ENCODE measurements at regions of chrX and their contacts with region 1.

Region 1: GRCh38 chrX:19756597-19757131 is 130.7 kb downstream of the SH3KBP1 start:
- DNase-seq: no peak
- ATAC-seq: no peak
- H3K4me3 ChIP-seq: no peak overlapping the region
- H3K4me3 Mint-ChIP-seq: no peak overlapping the region
- H3K27ac ChIP-seq: peak overlapping the region; percentile 49
- H3K27ac Mint-ChIP-seq: peak overlapping the region; percentile 34 to 66
- H3K4me1 ChIP-seq: peaks cover 23 to 41% of the 10 kb centered on the region in 2 experiments
- H3K4me1 Mint-ChIP-seq: peaks cover 69 to 87% (median 80%) of the 10 kb centered on the region in 3 donors
- H3K27me3 ChIP-seq: no peaks in the 10 kb centered on the region
- H3K27me3 Mint-ChIP-seq: peaks cover 0 to 3% of the 10 kb centered on the region in 2 donors

Region 2: GRCh38 chrX:19579485-19579884 is 177.2 kb before region 1 on chrX:
- CTCF ChIA-PET with region 1: no interaction called
- POLR2A ChIA-PET with region 1: no interaction called
- DNase-seq: no peak
- ATAC-seq: no peak
- H3K4me3 ChIP-seq: no peak overlapping the region
- H3K4me3 Mint-ChIP-seq: no peak overlapping the region
- H3K27ac ChIP-seq: no peak overlapping the region
- H3K27ac Mint-ChIP-seq: no peak overlapping the region
- H3K4me1 ChIP-seq: no peaks in the 10 kb centered on the region
- H3K4me1 Mint-ChIP-seq: peaks cover 3 to 16% (median 6%) of the 10 kb centered on the region in 3 donors
- H3K27me3 ChIP-seq: no peaks in the 10 kb centered on the region
- H3K27me3 Mint-ChIP-seq: no peaks in the 10 kb centered on the region

Region 3: GRCh38 chrX:19791562-19791961 is 34.9 kb after region 1 on chrX:
- CTCF ChIA-PET with region 1: interaction called, 3 to 7 read pairs
- POLR2A ChIA-PET with region 1: interaction called in 1 of 2 experiments, 12 read pairs
- DNase-seq: peak in 1 of 35 experiments; percentile 58
- ATAC-seq: peak; percentile 74 to 90 (median 84)
- H3K4me3 ChIP-seq: no peak overlapping the region
- H3K4me3 Mint-ChIP-seq: peak overlapping the region; percentile 7 to 56 (median 47)
- H3K27ac ChIP-seq: peak overlapping the region; percentile 47
- H3K27ac Mint-ChIP-seq: peak overlapping the region; percentile 60 to 88
- H3K4me1 ChIP-seq: peaks cover 32 to 55% of the 10 kb centered on the region in 2 experiments
- H3K4me1 Mint-ChIP-seq: peaks cover 45 to 76% (median 75%) of the 10 kb centered on the region in 3 donors
- H3K27me3 ChIP-seq: no peaks in the 10 kb centered on the region
- H3K27me3 Mint-ChIP-seq: peaks cover 0 to 4% of the 10 kb centered on the region in 2 donors

Region 4: DNA sequence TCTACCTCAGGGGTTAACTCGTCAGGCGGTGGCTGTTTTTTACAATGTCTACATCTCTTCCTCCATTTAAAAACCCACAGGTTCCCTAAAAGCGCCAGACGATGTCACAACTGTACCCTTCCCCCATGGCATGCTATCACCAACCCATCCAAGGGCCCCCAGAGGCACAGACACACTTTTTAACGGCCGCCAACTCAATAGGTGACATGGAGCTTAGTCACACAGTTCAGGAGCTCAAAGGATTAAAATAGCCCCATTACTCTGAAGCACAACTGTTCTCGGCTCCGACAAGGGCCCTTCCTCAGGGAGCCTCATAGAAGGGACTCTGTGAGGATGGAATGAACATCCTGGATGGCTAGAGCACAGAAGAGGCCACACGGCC is 118.4 kb after region 1 on chrX:
- CTCF ChIA-PET with region 1: no interaction called
- POLR2A ChIA-PET with region 1: interaction called in 1 of 2 experiments, 13 read pairs
- DNase-seq: no peak
- ATAC-seq: no peak
- H3K4me3 ChIP-seq: no peak overlapping the region
- H3K4me3 Mint-ChIP-seq: no peak overlapping the region
- H3K27ac ChIP-seq: no peak overlapping the region
- H3K27ac Mint-ChIP-seq: peak overlapping the region in 1 of 2 donors; percentile 52
- H3K4me1 ChIP-seq: peaks cover 3 to 8% of the 10 kb centered on the region in 2 experiments
- H3K4me1 Mint-ChIP-seq: peaks cover 14 to 57% (median 34%) of the 10 kb centered on the region in 3 donors
- H3K27me3 ChIP-seq: no peaks in the 10 kb centered on the region
- H3K27me3 Mint-ChIP-seq: no peaks in the 10 kb centered on the region

Measured in T-cell (primary cell).